ENCODE measurements at regions of chr6 and their contacts with region 1.

Region 1: GRCh38 chr6:155327326-155328073 is 13.2 kb upstream of the TFB1M start:
- DNase-seq: peak; percentile 82
- ATAC-seq: peak; percentile 63
- H3K4me3 Mint-ChIP-seq: no peak overlapping the region
- H3K27ac Mint-ChIP-seq: peak overlapping the region; percentile 86
- H3K4me1 Mint-ChIP-seq: peaks cover 27% of the 10 kb centered on the region
- H3K27me3 Mint-ChIP-seq: no peaks in the 10 kb centered on the region

Region 2: GRCh38 chr6:155309150-155309549 is 18.4 kb before region 1 on chr6:
- CTCF ChIA-PET with region 1: no interaction called
- POLR2A ChIA-PET with region 1: no interaction called
- intact Hi-C with region 1: no loop called
- DNase-seq: no peak
- ATAC-seq: no peak
- H3K4me3 Mint-ChIP-seq: no peak overlapping the region
- H3K27ac Mint-ChIP-seq: peak overlapping the region; percentile 21
- H3K4me1 Mint-ChIP-seq: peaks cover 44% of the 10 kb centered on the region
- H3K27me3 Mint-ChIP-seq: no peaks in the 10 kb centered on the region

Region 3: DNA sequence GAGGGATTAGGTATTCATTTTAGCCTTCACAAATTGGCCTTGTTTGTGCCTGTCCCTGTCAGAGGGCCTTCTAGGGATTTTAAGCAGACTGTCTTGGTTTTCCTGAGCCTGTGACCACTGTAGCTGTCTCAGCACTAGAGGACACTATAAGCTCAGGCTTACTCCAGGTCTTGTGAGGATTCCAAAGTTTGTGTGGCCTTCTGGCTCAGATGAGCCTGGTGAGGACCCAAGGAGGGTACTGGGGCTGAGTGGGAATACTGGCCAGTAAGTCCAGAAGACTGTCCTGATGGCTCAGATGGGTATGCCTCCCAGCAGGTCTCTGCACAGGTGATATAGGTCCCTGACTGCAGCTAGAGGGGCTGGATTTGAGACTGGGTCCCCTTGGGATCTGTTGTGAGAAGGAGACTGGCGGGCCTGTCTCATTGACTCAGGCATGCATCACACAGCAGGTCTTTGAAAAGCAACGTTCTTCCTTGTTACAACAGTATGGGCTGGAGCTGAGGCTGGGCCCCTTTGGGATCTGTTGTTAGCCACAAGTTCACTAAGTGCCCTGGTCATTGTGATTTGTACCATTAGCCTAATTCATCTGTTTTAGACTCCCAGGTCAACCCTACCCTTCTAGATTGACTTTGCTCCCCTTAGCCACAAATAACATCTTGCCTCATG is 13.1 kb after region 1 on chr6:
- CTCF ChIA-PET with region 1: interaction called, 13 read pairs
- POLR2A ChIA-PET with region 1: no interaction called
- intact Hi-C with region 1: no loop called
- DNase-seq: no peak
- ATAC-seq: no peak
- H3K4me3 Mint-ChIP-seq: no peak overlapping the region
- H3K27ac Mint-ChIP-seq: no peak overlapping the region
- H3K4me1 Mint-ChIP-seq: peaks cover 21% of the 10 kb centered on the region
- H3K27me3 Mint-ChIP-seq: no peaks in the 10 kb centered on the region

Region 4: DNA sequence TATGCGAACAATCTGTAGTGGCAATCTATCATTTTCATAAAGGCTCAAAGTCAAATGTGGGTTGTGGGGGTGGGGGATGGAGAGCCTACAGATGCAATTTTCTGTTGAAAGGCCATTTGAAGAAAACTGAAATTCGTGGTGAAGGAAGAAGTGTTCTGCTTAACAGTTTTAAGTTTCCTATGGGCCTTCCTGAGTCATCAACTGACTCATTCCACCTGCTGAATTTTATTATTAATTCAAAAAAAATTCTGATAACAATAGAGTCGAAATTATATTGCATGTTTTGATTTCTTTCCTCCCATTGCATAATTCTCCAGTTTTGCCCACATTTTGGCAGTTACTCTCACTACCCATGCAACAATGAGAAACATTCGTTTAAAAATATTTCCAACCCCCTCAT is 827.4 kb after region 1 on chr6:
- CTCF ChIA-PET with region 1: no interaction called
- POLR2A ChIA-PET with region 1: no interaction called
- intact Hi-C with region 1: loop called (anchors 10 kb)
- DNase-seq: peak; percentile 24
- ATAC-seq: peak; percentile 30
- H3K4me3 Mint-ChIP-seq: no peak overlapping the region
- H3K27ac Mint-ChIP-seq: peak overlapping the region; percentile 72
- H3K4me1 Mint-ChIP-seq: peaks cover 16% of the 10 kb centered on the region
- H3K27me3 Mint-ChIP-seq: no peaks in the 10 kb centered on the region

Region 5: DNA sequence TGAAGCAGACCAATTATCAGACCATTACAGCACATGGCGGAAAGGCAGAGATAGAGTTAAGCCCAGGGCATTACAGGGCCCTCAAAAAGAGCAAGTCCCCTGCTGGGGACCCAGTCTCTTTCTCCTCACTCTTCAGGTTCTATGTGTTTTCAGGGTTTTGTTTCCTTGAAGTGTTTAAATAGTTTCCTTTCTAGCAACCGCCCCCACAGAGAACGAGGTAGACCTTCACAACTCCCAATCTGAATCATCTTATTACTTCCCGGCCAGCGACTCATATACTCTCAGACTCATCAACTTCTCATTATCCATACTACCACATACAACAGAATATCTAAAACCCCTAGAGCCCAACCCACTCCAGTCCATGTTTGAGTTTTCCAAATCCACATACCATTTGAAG is 923.1 kb after region 1 on chr6:
- CTCF ChIA-PET with region 1: no interaction called
- POLR2A ChIA-PET with region 1: no interaction called
- intact Hi-C with region 1: loop called in 1 of 2 experiments (anchors 10 kb)
- DNase-seq: peak; percentile 74
- ATAC-seq: peak; percentile 97
- H3K4me3 Mint-ChIP-seq: no peak overlapping the region
- H3K27ac Mint-ChIP-seq: peak overlapping the region; percentile 97
- H3K4me1 Mint-ChIP-seq: peaks cover 29% of the 10 kb centered on the region
- H3K27me3 Mint-ChIP-seq: peaks cover 4% of the 10 kb centered on the region